ENCODE measurements at regions of chr10 and their contacts with region 1.

Region 1: DNA sequence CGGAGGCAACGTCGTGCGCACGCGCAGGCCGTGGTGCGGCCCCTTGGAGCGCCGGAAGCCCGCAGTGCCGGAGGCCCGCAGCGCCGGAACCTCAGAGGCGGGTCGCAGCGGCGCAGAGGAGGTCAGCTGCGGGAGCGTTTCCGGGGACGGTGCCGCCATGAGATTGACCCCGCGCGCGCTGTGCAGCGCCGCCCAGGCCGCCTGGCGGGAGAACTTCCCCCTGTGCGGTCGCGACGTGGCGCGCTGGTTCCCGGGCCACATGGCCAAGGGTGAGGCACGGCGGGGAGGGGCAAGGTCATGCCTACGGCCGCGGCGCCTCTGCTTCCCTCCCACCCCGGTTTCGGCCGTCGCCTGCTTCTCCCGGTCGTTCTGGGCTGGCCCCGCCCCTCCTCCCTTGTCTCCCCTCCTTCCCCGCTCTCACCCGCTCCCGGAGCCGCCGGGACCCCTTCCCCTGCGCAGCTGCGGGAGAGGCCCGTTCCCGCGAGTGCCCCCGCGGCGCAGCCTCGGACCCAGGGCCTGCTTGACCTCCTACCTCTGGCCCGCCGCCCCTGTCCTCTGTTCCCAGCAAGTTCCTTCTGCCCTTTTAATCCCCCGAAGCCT is at the start of gene MTG1:
- DNase-seq: peak; percentile 94
- H3K4me3 Mint-ChIP-seq: peak within 1 kb of the TSS; percentile 96
- H3K27ac Mint-ChIP-seq: peak within 1 kb of the TSS; percentile 90
- H3K4me1 Mint-ChIP-seq: peaks cover 55% of the 10 kb centered on the region
- H3K27me3 Mint-ChIP-seq: no peaks in the 10 kb centered on the region
- total RNA-seq, gene MTG1: 31.6 to 32.9 TPM

Region 2: DNA sequence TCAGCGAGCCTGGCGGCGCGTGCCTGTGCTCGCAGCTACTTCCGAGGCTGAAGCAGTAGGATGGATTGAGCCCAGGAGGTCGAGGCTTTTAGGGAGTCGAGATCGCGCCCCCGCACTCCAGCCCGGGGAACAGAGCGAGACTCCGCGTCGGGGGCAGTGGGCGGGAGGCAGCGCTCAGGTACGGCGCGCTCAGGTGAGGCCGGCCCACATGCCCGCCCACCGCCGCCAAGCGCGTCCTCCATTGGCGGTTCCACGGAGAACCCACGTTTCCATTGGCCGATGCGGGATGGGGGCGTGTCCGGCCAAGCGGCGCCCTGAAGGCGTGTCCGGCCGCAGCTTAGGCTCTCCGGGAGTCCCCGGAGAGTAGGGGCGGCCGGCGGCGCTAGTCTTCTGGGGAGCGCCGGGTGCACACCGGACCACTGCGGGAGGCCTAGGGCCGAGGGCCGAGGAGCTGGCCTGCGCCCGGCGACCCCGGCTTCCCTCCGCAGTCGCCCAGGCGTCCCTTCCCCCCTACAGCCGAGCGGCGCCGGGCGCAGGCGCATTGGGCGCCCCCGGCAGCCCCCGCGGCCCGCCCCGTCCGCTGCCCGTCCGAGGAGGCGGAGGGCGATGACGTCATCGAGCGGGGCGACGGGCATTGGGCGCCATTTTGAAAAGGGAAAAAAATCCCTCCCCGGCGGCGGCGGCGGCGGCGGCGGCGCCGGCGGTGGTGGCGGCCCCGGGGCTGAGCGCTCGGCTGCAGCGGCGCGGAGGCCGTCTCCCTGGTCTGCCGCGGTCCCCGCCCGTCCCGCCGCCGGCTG is 1493.6 kb before region 1 on chr10 and contains the start of gene PPP2R2D:
- CTCF ChIA-PET with region 1: no interaction called
- intact Hi-C with region 1: loop called (anchors 10 kb)
- DNase-seq: peak; percentile 94
- H3K4me3 Mint-ChIP-seq: peak within 1 kb of the TSS; percentile 87
- H3K27ac Mint-ChIP-seq: peak within 1 kb of the TSS; percentile 92
- H3K4me1 Mint-ChIP-seq: peaks cover 47% of the 10 kb centered on the region
- H3K27me3 Mint-ChIP-seq: peaks cover 4% of the 10 kb centered on the region
- total RNA-seq, gene PPP2R2D: 31.5 to 34.7 TPM

Region 3: DNA sequence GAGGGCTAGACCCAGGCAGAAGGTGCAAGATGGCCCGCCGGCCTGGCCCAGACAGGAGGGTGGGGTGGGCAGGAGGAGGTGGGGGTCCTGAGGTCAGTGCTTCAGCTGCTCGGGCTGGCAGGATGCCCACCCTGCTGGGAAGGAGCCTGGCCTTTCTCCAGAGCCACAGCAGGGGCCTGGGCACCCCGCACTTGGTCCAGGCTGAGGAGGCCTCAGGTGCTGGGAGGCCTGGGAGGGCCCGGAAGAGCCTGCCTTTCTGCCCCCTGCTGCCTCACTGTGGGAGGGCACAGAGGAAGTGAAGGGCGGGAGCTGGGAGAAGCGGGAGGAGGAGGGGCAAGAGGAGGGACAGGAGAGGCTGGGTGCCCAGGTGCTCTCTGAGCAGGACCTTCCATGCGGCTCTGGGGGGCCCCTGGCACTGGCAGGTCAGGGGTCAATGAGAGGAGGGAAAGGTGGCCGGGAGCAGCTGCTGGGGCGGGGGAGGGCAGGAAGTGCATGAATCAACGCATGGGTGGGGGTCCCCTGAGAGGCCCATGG is 947.4 kb before region 1 on chr10:
- CTCF ChIA-PET with region 1: no interaction called
- intact Hi-C with region 1: loop called (anchors 5 kb)
- DNase-seq: peak; percentile 93
- H3K4me3 Mint-ChIP-seq: peak overlapping the region; percentile 89
- H3K27ac Mint-ChIP-seq: peak overlapping the region; percentile 98
- H3K4me1 Mint-ChIP-seq: peaks cover 33% of the 10 kb centered on the region
- H3K27me3 Mint-ChIP-seq: no peaks in the 10 kb centered on the region

Region 4: GRCh38 chr10:133261726-133262325 is 132.3 kb before region 1 on chr10:
- CTCF ChIA-PET with region 1: interaction called, 3 read pairs
- intact Hi-C with region 1: loop called (anchors 1 kb)
- DNase-seq: peak; percentile 87
- H3K4me3 Mint-ChIP-seq: peak overlapping the region; percentile 82
- H3K27ac Mint-ChIP-seq: no peak overlapping the region
- H3K4me1 Mint-ChIP-seq: peaks cover 75% of the 10 kb centered on the region
- H3K27me3 Mint-ChIP-seq: no peaks in the 10 kb centered on the region

Region 5: GRCh38 chr10:133309111-133309719 is 84.9 kb before region 1 on chr10:
- CTCF ChIA-PET with region 1: interaction called, 3 read pairs
- intact Hi-C with region 1: loop called (anchors 1 kb)
- DNase-seq: peak; percentile 95
- H3K4me3 Mint-ChIP-seq: peak overlapping the region; percentile 65
- H3K27ac Mint-ChIP-seq: peak overlapping the region; percentile 71
- H3K4me1 Mint-ChIP-seq: peaks cover 23% of the 10 kb centered on the region
- H3K27me3 Mint-ChIP-seq: no peaks in the 10 kb centered on the region

Region 6: GRCh38 chr10:133357285-133358151 is 36.6 kb before region 1 on chr10 and contains the start of gene FUOM:
- CTCF ChIA-PET with region 1: no interaction called
- intact Hi-C with region 1: loop called (anchors 1 kb)
- DNase-seq: peak; percentile 75
- H3K4me3 Mint-ChIP-seq: peak within 1 kb of the TSS; percentile 77
- H3K27ac Mint-ChIP-seq: no peak within 1 kb of the TSS
- H3K4me1 Mint-ChIP-seq: peaks cover 3% of the 10 kb centered on the region
- H3K27me3 Mint-ChIP-seq: no peaks in the 10 kb centered on the region
- total RNA-seq, gene FUOM: 29.9 to 34.9 TPM

Region 7: DNA sequence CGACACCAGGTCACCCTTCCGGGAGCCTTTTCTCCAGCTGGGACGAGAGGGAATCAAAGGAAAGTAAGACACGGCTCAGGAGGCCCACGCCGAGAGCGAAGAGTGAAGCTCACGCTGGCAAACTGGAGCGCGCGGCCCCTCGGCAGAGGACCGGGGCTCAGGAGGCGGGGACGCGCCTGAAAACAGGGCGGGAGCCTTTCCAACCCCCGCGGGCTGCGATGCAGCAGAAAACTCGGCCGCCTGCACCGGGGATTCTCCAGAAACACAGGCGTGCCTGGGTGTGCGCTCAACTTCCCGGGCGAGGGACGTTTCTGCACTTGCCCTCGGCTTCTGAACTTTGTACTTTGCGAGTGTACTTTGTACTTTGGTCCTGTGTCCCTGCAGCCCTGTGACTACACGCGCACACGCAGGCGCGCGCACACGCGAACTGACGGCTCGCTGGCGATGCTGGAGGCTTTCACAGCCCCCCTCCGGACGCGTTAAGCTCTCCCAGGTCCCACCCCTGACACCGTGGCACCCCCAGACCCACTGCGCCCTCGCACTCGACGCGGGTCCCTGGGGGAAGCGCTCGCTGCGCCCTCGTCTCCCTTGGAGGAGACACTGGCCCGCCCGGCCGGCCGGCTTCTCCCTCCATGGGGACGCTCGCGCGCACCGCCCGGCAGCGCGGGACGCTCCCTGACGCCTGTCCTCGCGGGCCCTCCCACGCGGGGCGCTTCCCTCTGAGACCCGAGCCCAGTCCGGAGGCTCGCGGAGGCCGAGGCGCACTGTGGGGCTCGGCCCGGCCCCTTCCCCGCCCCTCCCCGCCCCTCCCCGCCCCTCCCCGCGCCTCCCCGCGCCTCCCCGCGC is 15.7 kb before region 1 on chr10:
- CTCF ChIA-PET with region 1: no interaction called
- intact Hi-C with region 1: loop called (anchors 1 kb)
- DNase-seq: peak; percentile 61
- H3K4me3 Mint-ChIP-seq: peak overlapping the region; percentile 74
- H3K27ac Mint-ChIP-seq: peak overlapping the region; percentile 30
- H3K4me1 Mint-ChIP-seq: peaks cover 5% of the 10 kb centered on the region
- H3K27me3 Mint-ChIP-seq: no peaks in the 10 kb centered on the region